Activated T-helper 1 cell treated with anti-CD3 and anti-CD28 coated beads, Interleukin-12 subunit alpha, Interleukin-12 subunit beta, Interleukin-2, Interleukin-4 antibody, amounts not matched to agents 30 ng/mL and 10 ng/mL and 1 ng/mL, durations not matched to agents 14 hours and 24 hours and 36 hours (primary cell): ENCODE measurements at regions of chr7 and their contacts with region 1.

Region 1: GRCh38 chr7:112449902-112450806 is at the start of gene IFRD1:
- DNase-seq: peak; percentile 97
- H3K4me3 Mint-ChIP-seq: peak within 1 kb of the TSS; percentile 92
- H3K27ac Mint-ChIP-seq: peak within 1 kb of the TSS; percentile 94
- H3K4me1 Mint-ChIP-seq: peaks cover 47% of the 10 kb centered on the region
- H3K27me3 Mint-ChIP-seq: no peaks in the 10 kb centered on the region
- total RNA-seq, gene IFRD1: 88.3 and 97.1 TPM in 2 replicates

Region 2: GRCh38 chr7:111029574-111030251 is 1420.4 kb before region 1 on chr7:
- intact Hi-C with region 1: loop called (anchors 5 kb)
- DNase-seq: no peak
- H3K4me3 Mint-ChIP-seq: peak overlapping the region; percentile 68
- H3K27ac Mint-ChIP-seq: peak overlapping the region; percentile 94
- H3K4me1 Mint-ChIP-seq: peaks cover 64% of the 10 kb centered on the region
- H3K27me3 Mint-ChIP-seq: no peaks in the 10 kb centered on the region

Region 3: DNA sequence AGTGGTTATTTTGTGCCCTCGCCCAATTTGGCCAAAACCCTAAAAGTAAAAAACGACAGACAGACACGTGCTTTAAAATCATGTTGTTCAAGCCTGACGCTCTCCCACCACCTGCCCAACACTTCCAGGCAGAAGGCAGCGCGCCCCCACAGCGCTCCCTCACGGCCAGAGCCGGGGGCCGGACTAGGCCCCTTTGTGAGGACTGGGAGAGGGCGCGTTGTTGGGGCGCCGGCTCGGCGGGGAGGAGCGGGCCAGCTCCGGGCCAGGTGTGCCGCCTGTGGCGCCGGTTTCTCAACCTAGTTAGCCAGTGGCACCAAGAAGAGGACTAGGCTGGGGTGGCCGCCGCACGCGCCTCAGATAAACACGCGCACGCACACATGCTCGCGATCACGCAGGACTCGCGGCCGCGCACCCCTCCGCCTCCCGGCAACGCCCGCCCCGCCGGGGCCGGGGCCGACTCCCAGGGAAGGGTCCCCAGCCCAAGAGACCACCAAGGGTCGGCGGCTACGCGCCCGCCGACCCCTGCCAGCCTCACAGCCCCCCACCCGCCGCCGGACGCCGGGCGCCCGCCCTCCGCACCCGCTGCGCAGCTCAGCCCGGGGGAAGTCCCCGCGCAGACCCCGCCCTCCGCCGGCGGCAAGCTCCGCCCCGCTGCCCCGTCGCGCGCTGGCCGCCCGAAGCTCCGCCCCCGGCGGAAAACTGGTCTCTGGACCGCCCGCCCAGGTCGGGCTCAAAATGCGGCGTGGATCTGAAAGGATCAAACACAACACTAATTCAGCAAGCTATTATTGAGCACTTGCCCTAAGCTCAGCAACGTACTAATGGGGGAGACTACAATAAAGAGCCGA is 888.0 kb before region 1 on chr7 and contains the start of gene IMMP2L:
- intact Hi-C with region 1: loop called (anchors 5 kb)
- DNase-seq: peak; percentile 89
- H3K4me3 Mint-ChIP-seq: peak within 1 kb of the TSS; percentile 87
- H3K27ac Mint-ChIP-seq: peak within 1 kb of the TSS; percentile 89
- H3K4me1 Mint-ChIP-seq: peaks cover 37% of the 10 kb centered on the region
- H3K27me3 Mint-ChIP-seq: no peaks in the 10 kb centered on the region
- total RNA-seq, gene IMMP2L: 11.3 and 16.0 TPM in 2 replicates

Region 4: DNA sequence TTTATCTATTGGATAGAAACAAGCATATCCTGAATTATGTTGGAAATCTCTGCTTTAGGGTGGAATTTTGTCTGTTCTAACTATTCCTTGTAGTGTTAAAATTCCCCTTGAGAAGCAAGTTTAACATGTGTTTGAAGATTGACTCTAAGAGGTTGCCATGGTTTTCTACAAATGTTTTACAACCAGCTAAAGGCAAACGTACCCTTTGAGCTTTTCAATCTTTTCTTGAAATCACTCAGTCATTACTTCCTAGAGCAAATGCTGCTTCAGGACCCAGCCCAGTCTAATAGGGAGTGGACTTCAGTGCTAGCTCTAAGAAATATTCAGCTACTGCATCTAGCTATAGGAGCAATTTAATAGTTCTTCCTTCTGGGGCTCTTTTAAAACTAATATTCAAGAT is 118.7 kb before region 1 on chr7:
- intact Hi-C with region 1: no loop called
- DNase-seq: no peak
- H3K4me3 Mint-ChIP-seq: no peak overlapping the region
- H3K27ac Mint-ChIP-seq: no peak overlapping the region
- H3K4me1 Mint-ChIP-seq: no peaks in the 10 kb centered on the region
- H3K27me3 Mint-ChIP-seq: no peaks in the 10 kb centered on the region

Region 5: GRCh38 chr7:112383671-112384417 is 66.3 kb before region 1 on chr7:
- intact Hi-C with region 1: no loop called
- DNase-seq: no peak
- H3K4me3 Mint-ChIP-seq: no peak overlapping the region
- H3K27ac Mint-ChIP-seq: no peak overlapping the region
- H3K4me1 Mint-ChIP-seq: no peaks in the 10 kb centered on the region
- H3K27me3 Mint-ChIP-seq: peaks cover 20% of the 10 kb centered on the region

Region 6: GRCh38 chr7:112422842-112423496 is 27.2 kb before region 1 on chr7:
- intact Hi-C with region 1: loop called (anchors 2 kb)
- DNase-seq: no peak
- H3K4me3 Mint-ChIP-seq: no peak overlapping the region
- H3K27ac Mint-ChIP-seq: peak overlapping the region; percentile 37
- H3K4me1 Mint-ChIP-seq: peaks cover 22% of the 10 kb centered on the region
- H3K27me3 Mint-ChIP-seq: no peaks in the 10 kb centered on the region

Region 7: GRCh38 chr7:112510001-112510742 is 60.0 kb after region 1 on chr7:
- intact Hi-C with region 1: loop called (anchors 1 kb)
- DNase-seq: no peak
- H3K4me3 Mint-ChIP-seq: peak overlapping the region; percentile 36
- H3K27ac Mint-ChIP-seq: peak overlapping the region; percentile 22
- H3K4me1 Mint-ChIP-seq: peaks cover 31% of the 10 kb centered on the region
- H3K27me3 Mint-ChIP-seq: peaks cover 2% of the 10 kb centered on the region

Region 8: DNA sequence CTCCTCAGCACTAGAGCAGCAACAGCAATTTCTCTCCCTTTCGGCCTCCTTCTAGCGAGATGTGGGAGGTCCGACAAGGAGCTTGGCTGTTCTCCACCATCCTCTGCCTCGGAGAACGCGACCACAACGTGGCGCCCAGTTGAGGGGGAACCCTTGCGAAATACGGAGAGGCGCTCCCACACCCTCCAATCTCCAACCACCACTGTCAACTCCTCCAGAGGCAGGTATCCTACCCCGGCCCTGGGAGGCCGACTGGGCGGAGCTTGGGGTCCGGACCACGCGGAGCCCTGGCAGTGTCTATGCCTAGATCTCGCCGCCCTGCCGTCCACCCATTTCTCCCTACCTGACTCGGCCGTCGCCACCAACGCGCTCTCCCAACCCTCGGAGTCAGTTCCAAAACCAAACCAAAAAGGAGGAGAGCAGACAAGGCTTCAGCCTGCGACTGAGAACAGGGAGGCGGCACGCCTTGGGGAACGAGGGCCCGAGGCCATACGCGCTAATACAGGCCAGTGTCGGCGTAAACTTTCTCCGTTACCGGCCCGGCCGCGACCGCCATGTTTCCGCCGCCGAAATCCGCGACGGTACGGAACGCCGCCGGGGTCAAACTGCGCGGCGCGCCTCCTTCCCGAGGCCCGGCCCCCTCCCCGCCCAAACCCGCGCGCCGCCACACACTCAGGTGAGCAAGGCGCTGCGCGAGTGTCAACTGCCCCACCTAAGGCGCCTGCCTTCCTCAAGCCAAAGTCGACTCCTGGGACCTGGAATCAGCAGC is 339.8 kb after region 1 on chr7 and contains the start of gene TMEM168:
- intact Hi-C with region 1: loop called (anchors 1 kb)
- DNase-seq: peak; percentile 77
- H3K4me3 Mint-ChIP-seq: peak within 1 kb of the TSS; percentile 96
- H3K27ac Mint-ChIP-seq: peak within 1 kb of the TSS; percentile 85
- H3K4me1 Mint-ChIP-seq: peaks cover 41% of the 10 kb centered on the region
- H3K27me3 Mint-ChIP-seq: no peaks in the 10 kb centered on the region
- total RNA-seq, gene TMEM168: 18.1 and 18.2 TPM in 2 replicates

Region 9: DNA sequence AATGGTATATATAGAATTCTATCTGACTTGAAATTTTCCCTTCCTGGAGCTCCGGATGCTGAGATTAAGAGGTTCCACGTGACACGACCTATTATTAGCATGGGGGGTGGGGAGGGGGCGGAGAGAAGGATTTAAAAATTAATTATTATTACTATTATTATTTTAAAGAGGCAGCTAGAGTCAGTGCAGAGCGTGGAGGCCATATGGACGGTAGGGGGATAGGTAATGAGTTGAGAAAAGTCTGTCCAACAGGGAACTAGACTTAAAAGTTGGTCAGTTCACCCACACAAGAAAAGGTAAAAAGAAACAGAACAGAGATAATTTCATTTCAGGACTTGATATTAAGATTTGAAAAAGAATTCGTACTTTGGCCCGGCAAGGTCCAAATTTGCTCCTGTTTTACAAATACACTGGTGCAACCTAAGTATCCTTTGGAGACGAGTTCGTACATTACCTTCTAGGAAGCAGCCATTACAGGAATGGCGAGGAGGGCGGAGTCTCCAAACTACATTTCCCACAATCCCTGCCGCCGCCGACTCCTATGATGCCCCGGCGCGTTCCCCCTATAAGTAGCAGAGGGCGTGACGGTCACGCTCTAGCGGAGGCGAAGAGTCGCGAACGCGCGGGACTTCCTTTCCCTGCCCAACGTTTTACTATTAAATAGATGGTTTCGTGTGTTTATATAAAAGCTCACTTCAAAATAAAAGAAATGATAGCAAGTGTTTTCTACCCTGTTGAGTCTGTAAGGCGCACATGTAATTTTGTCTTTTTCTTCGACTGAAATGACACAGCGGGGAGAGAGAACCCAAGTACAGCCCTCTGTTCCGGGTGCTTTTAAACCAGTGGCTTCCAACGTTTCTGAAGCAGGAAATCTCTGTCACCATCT is 668.2 kb after region 1 on chr7 and contains the start of gene SMIM30:
- intact Hi-C with region 1: loop called (anchors 1 kb)
- DNase-seq: peak; percentile 83
- H3K4me3 Mint-ChIP-seq: peak within 1 kb of the TSS; percentile 93
- H3K27ac Mint-ChIP-seq: peak within 1 kb of the TSS; percentile 92
- H3K4me1 Mint-ChIP-seq: peaks cover 46% of the 10 kb centered on the region
- H3K27me3 Mint-ChIP-seq: no peaks in the 10 kb centered on the region
- total RNA-seq, gene SMIM30: 32.4 and 36.8 TPM in 2 replicates